Mammary epithelial cell (primary cell): ENCODE measurements at regions of chr3 and their contacts with region 1.

Region 1: GRCh38 chr3:184568924-184569829 is 7.6 kb downstream of the EPHB3 start:
- DNase-seq: peak; percentile 82
- H3K4me3 ChIP-seq: peak overlapping the region; percentile 27 to 47 (median 44)
- H3K27ac ChIP-seq: no peak overlapping the region
- H3K4me1 ChIP-seq: peaks cover 55% of the 10 kb centered on the region
- H3K27me3 ChIP-seq: no peaks in the 10 kb centered on the region
- CTCF ChIP-seq: no peak

Region 2: DNA sequence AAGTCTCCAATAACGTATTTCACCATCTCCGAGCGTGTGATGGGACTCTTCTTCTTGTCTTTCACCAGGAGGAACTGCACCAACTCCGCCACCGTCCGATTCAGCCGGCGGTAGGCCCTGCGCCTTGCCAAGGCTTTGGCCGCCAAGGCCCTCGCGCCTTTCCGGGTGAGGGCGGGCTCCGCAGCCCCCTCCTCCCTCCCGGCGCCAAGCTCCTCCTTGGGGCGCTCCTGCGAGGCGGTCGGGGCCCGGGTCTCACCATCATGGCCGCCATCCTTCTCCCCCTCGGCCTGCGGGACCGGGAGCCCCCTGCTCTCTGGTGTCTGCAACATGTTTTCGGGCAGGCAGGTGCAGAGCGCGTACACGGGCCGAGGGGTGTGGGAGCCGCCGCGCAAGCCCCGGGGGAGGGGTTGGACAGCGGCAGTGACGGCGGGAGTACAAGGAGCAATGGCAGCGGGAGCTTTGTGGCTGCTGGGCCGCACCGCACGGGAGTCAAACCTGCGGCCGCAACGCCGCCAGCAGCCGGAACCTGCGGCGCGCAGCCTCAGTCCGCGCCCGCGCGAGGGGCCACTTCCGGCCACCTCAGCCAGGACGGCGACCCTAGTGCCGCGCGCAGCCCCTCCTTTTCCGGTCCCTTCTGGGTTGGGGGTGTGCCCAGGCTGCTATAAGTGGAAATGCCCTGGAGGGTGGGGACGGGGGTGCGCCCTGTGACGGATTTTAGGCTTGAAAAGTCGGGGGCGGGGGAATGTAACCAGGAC is 142.5 kb after region 1 on chr3 and contains the start of gene MAGEF1:
- CTCF ChIA-PET with region 1: no interaction called
- dilution Hi-C with region 1: no loop called
- in situ Hi-C with region 1: no loop called
- intact Hi-C with region 1: loop called (anchors 2 kb)
- DNase-seq: peak; percentile 77
- H3K4me3 ChIP-seq: peak within 1 kb of the TSS; percentile 74 to 90 (median 83)
- H3K27ac ChIP-seq: peak within 1 kb of the TSS; percentile 80
- H3K4me1 ChIP-seq: peaks cover 16% of the 10 kb centered on the region
- H3K27me3 ChIP-seq: no peaks in the 10 kb centered on the region
- CTCF ChIP-seq: no peak
- total RNA-seq, gene MAGEF1: 19.0 to 27.8 TPM

Region 3: DNA sequence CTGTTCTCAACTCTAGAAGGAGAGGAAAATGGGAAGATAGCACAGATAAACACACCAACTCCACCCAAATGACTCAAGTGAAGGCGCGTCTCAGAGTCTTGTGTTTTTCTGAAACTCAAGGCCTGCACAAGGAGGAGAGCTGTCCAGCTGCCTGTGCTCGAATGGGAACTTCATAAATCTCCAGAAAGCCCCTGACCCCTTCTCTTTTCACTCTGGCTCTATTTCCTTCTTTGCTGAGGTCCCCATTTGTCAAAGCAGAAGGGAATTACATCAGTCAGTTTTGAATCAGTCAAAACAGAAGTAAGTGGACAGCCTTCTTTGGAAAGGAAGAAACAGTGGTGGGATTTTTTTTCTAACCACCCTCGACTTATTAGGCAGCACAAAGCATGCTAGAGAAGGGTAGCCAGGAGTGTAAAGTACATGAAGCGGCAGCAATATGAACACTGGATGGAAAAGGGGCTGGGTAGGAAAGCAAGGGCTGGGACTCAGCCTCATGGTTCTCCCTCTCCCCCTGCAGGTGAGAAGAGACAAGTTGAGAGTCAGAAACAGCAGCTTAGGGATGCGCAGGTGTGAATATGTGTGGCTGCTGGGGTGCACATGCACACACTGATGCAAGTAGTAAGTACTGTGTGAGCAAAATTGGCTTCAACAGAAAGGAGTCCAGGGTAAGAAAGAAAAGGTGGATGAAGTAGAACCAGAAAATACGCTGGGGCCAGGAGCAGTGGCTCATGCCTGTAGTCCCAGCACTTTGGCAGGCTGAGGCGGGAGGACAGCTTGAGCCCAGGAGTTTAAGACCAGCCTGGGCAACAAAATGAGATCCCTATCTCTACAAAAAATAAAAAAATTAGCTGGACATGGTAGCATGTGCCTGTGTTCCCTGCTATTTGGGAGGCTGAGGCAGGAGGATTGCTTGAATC is 179.3 kb after region 1 on chr3:
- CTCF ChIA-PET with region 1: no interaction called
- dilution Hi-C with region 1: no loop called
- in situ Hi-C with region 1: no loop called
- intact Hi-C with region 1: loop called (anchors 1 kb)
- DNase-seq: peak; percentile 83
- H3K4me3 ChIP-seq: no peak overlapping the region
- H3K27ac ChIP-seq: peak overlapping the region; percentile 54
- H3K4me1 ChIP-seq: peaks cover 8% of the 10 kb centered on the region
- H3K27me3 ChIP-seq: no peaks in the 10 kb centered on the region
- CTCF ChIP-seq: peak; percentile 74 to 93

Region 4: DNA sequence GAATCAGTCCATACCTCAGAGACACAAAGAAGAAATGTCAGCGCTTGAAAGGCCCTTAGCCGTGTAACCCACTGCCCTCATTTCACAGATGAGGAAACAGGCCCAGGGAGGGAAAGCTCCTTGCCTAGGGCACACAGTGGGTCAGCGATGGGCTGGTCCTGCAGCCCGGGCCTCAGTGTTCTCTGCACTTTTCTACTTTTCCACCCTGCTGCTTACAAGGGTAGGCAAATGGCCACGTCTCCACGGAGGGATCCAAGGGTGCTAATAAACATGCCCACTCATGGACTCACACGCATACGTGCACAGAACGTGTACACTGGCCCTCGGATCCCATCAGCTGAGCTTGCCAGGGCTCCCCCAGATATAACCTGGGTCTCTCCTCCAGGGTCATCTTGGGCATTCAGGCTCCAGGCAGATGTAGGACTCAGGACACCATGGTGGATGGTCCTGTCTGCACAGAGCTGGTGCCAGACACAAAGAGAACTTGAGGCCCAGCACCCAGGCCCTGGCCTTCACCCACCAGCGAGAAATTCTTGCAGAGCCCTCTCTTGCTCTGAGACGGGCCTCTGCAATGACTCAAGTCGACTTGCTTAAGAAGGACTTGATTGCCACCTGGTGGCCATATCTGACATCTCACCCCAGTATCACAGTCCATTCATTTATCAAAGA is 208.3 kb after region 1 on chr3:
- CTCF ChIA-PET with region 1: no interaction called
- dilution Hi-C with region 1: no loop called
- in situ Hi-C with region 1: no loop called
- intact Hi-C with region 1: loop called (anchors 1 kb)
- DNase-seq: peak; percentile 80
- H3K4me3 ChIP-seq: no peak overlapping the region
- H3K27ac ChIP-seq: no peak overlapping the region
- H3K4me1 ChIP-seq: peaks cover 18% of the 10 kb centered on the region
- H3K27me3 ChIP-seq: no peaks in the 10 kb centered on the region
- CTCF ChIP-seq: peak; percentile 74

Region 5: DNA sequence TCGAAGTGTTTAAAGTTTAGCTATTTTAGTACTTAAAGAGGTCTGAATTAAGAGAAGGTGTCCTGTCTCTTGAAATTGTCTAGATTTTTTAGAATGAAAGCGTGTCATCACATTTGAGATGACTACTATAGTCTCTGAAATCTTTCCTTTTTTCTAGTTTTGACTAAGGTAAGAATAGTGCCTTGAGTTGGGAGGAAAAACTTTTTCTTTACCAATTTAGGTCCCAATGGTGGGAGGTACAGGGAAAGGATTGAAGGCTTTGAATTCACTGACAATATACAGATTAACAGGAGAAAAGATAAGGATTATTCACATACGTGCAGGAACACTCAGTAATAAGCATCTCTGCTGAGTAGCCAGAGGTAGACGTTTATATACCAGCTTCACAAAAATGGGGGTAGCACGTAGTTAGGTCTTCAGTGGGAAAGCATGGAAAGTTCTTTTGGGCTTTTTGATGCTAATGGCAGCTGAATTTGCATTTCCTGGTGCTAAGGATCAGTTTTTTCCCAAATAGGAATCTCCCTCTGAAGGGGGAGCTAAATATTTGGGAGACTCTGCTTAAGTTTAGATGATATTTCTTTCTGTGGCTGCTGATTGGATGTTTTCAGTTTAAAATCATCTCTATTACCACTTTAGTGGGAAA is 330.9 kb after region 1 on chr3:
- CTCF ChIA-PET with region 1: no interaction called
- dilution Hi-C with region 1: no loop called
- in situ Hi-C with region 1: no loop called
- intact Hi-C with region 1: no loop called
- DNase-seq: no peak
- H3K4me3 ChIP-seq: no peak overlapping the region
- H3K27ac ChIP-seq: no peak overlapping the region
- H3K4me1 ChIP-seq: no peaks in the 10 kb centered on the region
- H3K27me3 ChIP-seq: no peaks in the 10 kb centered on the region
- CTCF ChIP-seq: no peak

Region 6: GRCh38 chr3:185282696-185283394 is 713.7 kb after region 1 on chr3:
- CTCF ChIA-PET with region 1: no interaction called
- dilution Hi-C with region 1: no loop called
- in situ Hi-C with region 1: no loop called
- intact Hi-C with region 1: loop called (anchors 5 kb)
- DNase-seq: peak; percentile 96
- H3K4me3 ChIP-seq: peak overlapping the region; percentile 67 to 84 (median 73)
- H3K27ac ChIP-seq: peak overlapping the region; percentile 69
- H3K4me1 ChIP-seq: no peaks in the 10 kb centered on the region
- H3K27me3 ChIP-seq: no peaks in the 10 kb centered on the region
- CTCF ChIP-seq: no peak